CD8-positive, alpha-beta T cell (primary cell): ENCODE measurements at regions of chr19 and their contacts with region 1.

Region 1: DNA sequence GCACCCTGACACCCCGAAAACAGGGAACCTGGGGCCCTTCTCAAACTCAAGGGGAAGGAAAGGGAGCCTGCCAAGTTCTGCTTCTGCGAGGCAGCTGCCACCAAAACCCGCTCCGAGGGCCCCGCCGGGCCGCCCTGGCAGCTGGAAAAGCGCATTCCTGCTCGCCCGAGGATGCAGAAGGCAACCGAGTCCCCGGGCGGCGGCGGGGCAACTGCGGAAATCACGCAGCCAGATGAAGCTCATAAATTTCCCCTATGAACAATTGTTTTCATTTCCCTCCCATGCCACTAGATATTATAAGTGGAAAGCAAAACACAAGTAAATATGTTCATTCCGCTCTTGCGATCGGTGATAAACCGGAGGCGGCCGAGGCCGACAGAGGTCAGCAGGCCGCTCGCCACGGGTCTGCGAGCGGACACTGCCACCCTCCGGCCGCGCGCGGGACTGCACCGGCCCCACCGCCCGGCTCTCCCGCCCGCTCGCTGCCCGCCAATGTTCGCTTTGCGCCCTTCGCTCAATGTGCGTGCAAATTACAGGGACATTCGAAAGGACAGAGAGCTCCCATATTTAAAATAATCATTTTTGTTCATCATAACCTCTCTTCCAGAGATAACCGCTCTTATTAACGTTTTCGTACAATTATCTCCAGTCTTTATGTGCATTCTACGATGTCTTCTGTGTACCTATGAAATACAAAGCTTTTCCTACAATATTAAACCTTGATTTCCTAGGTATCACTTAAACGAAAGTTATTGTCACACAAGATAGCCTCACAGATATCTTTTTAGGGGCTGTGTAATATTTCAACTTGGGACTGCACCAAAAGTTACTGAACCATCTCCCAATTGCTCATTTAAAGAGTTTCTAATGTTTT is 120.8 kb upstream of the ZNF507 start:
- DNase-seq: peak; percentile 15 to 74 (median 56)
- ATAC-seq: peak; percentile 60
- H3K4me3 ChIP-seq: peak overlapping the region; percentile 24 to 27
- H3K4me3 Mint-ChIP-seq: peak overlapping the region; percentile 77
- H3K27ac ChIP-seq: no peak overlapping the region
- H3K27ac Mint-ChIP-seq: no peak overlapping the region
- H3K4me1 ChIP-seq: peaks cover 12% of the 10 kb centered on the region
- H3K4me1 Mint-ChIP-seq: peaks cover 14% of the 10 kb centered on the region
- H3K27me3 ChIP-seq: peaks cover 12 to 14% of the 10 kb centered on the region in 2 experiments
- H3K27me3 Mint-ChIP-seq: peaks cover 41% of the 10 kb centered on the region
- CTCF ChIP-seq: peak; percentile 100

Region 2: GRCh38 chr19:30669329-30670010 is 1555.1 kb before region 1 on chr19:
- CTCF ChIA-PET with region 1: interaction called, 72 read pairs
- POLR2A ChIA-PET with region 1: no interaction called
- intact Hi-C with region 1: loop called in 1 of 2 experiments (anchors 1 kb)
- DNase-seq: peak in 8 of 9 experiments; percentile 11 to 59 (median 41)
- ATAC-seq: no peak
- H3K4me3 ChIP-seq: no peak overlapping the region
- H3K4me3 Mint-ChIP-seq: no peak overlapping the region
- H3K27ac ChIP-seq: no peak overlapping the region
- H3K27ac Mint-ChIP-seq: no peak overlapping the region
- H3K4me1 ChIP-seq: no peaks in the 10 kb centered on the region
- H3K4me1 Mint-ChIP-seq: no peaks in the 10 kb centered on the region
- H3K27me3 ChIP-seq: peaks cover 0 to 6% of the 10 kb centered on the region in 2 experiments
- H3K27me3 Mint-ChIP-seq: peaks cover 36% of the 10 kb centered on the region
- CTCF ChIP-seq: peak; percentile 66

Region 3: GRCh38 chr19:30682999-30683536 is 1541.5 kb before region 1 on chr19:
- CTCF ChIA-PET with region 1: interaction called, 39 read pairs
- POLR2A ChIA-PET with region 1: no interaction called
- intact Hi-C with region 1: loop called in 1 of 2 experiments (anchors 1 kb)
- DNase-seq: peak in 8 of 9 experiments; percentile 27 to 61 (median 44)
- ATAC-seq: no peak
- H3K4me3 ChIP-seq: no peak overlapping the region
- H3K4me3 Mint-ChIP-seq: no peak overlapping the region
- H3K27ac ChIP-seq: no peak overlapping the region
- H3K27ac Mint-ChIP-seq: no peak overlapping the region
- H3K4me1 ChIP-seq: no peaks in the 10 kb centered on the region
- H3K4me1 Mint-ChIP-seq: no peaks in the 10 kb centered on the region
- H3K27me3 ChIP-seq: no peaks in the 10 kb centered on the region
- H3K27me3 Mint-ChIP-seq: peaks cover 35% of the 10 kb centered on the region
- CTCF ChIP-seq: peak; percentile 68

Region 4: DNA sequence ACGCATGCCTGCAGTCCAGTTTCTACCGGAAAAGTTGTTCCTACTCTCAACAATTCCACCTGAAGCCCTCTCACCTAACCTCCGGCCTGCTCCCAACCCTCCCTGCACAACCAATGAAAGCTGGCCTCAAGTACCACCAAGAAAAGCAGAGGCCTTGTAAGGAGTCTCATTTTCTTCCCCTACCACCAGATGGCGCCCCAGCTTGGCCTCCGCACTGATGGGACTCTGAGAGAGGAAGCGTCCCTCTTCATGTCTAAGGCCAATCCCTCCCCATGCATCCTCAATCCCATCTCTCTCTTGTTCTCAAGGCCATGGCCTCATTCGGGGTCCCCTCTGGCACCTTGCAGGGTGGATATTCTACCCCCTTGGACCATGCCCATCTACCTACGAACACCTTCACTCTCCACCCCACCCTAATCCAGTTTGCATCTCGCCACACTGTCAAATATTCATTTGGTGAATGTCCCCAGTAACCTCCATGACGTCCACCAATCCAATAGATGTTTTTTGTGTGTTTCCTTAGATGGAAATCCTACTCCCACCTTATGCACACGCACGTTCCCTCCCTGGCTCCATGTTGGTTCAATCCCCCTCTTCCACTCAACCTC is 1439.7 kb before region 1 on chr19:
- CTCF ChIA-PET with region 1: interaction called, 39 read pairs
- POLR2A ChIA-PET with region 1: no interaction called
- intact Hi-C with region 1: loop called in 1 of 2 experiments (anchors 1 kb)
- DNase-seq: peak; percentile 18 to 72 (median 51)
- ATAC-seq: no peak
- H3K4me3 ChIP-seq: no peak overlapping the region
- H3K4me3 Mint-ChIP-seq: no peak overlapping the region
- H3K27ac ChIP-seq: no peak overlapping the region
- H3K27ac Mint-ChIP-seq: no peak overlapping the region
- H3K4me1 ChIP-seq: no peaks in the 10 kb centered on the region
- H3K4me1 Mint-ChIP-seq: no peaks in the 10 kb centered on the region
- H3K27me3 ChIP-seq: no peaks in the 10 kb centered on the region
- H3K27me3 Mint-ChIP-seq: peaks cover 9% of the 10 kb centered on the region
- CTCF ChIP-seq: peak; percentile 44

Region 5: GRCh38 chr19:31349160-31349881 is 875.3 kb before region 1 on chr19 and contains the start of gene TSHZ3:
- CTCF ChIA-PET with region 1: no interaction called
- POLR2A ChIA-PET with region 1: no interaction called
- intact Hi-C with region 1: loop called in 1 of 2 experiments (anchors 10 kb)
- DNase-seq: peak in 6 of 9 experiments; percentile 12 to 69 (median 48)
- ATAC-seq: peak; percentile 45
- H3K4me3 ChIP-seq: peak within 1 kb of the TSS; percentile 37 to 48
- H3K4me3 Mint-ChIP-seq: peak within 1 kb of the TSS; percentile 74
- H3K27ac ChIP-seq: no peak within 1 kb of the TSS
- H3K27ac Mint-ChIP-seq: no peak within 1 kb of the TSS
- H3K4me1 ChIP-seq: peaks cover 22% of the 10 kb centered on the region
- H3K4me1 Mint-ChIP-seq: peaks cover 23% of the 10 kb centered on the region
- H3K27me3 ChIP-seq: peaks cover 30 to 53% of the 10 kb centered on the region in 2 experiments
- H3K27me3 Mint-ChIP-seq: peaks cover 58% of the 10 kb centered on the region
- CTCF ChIP-seq: no peak
- total RNA-seq, gene TSHZ3: not detected

Region 6: GRCh38 chr19:31627620-31628361 is 596.8 kb before region 1 on chr19:
- CTCF ChIA-PET with region 1: no interaction called
- POLR2A ChIA-PET with region 1: no interaction called
- intact Hi-C with region 1: no loop called
- DNase-seq: no peak
- ATAC-seq: no peak
- H3K4me3 ChIP-seq: no peak overlapping the region
- H3K4me3 Mint-ChIP-seq: no peak overlapping the region
- H3K27ac ChIP-seq: no peak overlapping the region
- H3K27ac Mint-ChIP-seq: no peak overlapping the region
- H3K4me1 ChIP-seq: no peaks in the 10 kb centered on the region
- H3K4me1 Mint-ChIP-seq: no peaks in the 10 kb centered on the region
- H3K27me3 ChIP-seq: peaks cover 0 to 2% of the 10 kb centered on the region in 2 experiments
- H3K27me3 Mint-ChIP-seq: peaks cover 3% of the 10 kb centered on the region
- CTCF ChIP-seq: no peak

Region 7: DNA sequence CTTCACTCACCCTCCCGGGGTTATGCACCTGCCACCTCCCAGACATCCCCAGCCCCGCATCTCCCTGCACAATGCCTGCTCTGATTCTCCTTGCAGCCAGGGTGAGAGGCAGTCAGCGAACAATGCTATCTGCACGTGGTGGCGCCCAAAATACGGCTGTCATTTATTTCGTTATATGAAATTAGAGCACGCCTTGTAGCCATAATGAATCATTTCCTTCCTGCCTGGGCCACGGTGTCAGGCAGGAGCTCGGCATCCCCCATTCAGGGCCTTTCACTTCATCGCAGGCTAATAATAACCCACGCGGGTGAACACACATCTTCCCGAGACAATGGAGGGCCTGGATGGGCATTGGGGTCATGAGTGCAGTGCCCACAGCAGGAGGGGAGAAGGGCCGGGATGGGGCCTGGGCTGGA is 23.0 kb before region 1 on chr19:
- CTCF ChIA-PET with region 1: interaction called, 15 read pairs
- POLR2A ChIA-PET with region 1: no interaction called
- intact Hi-C with region 1: no loop called
- DNase-seq: peak in 1 of 9 experiments; percentile 2
- ATAC-seq: no peak
- H3K4me3 ChIP-seq: no peak overlapping the region
- H3K4me3 Mint-ChIP-seq: no peak overlapping the region
- H3K27ac ChIP-seq: no peak overlapping the region
- H3K27ac Mint-ChIP-seq: no peak overlapping the region
- H3K4me1 ChIP-seq: no peaks in the 10 kb centered on the region
- H3K4me1 Mint-ChIP-seq: peaks cover 2% of the 10 kb centered on the region
- H3K27me3 ChIP-seq: peaks cover 0 to 2% of the 10 kb centered on the region in 2 experiments
- H3K27me3 Mint-ChIP-seq: peaks cover 24% of the 10 kb centered on the region
- CTCF ChIP-seq: no peak

Region 8: GRCh38 chr19:32234663-32235217 is 10.1 kb after region 1 on chr19:
- CTCF ChIA-PET with region 1: interaction called, 17 read pairs
- POLR2A ChIA-PET with region 1: no interaction called
- intact Hi-C with region 1: no loop called
- DNase-seq: no peak
- ATAC-seq: no peak
- H3K4me3 ChIP-seq: no peak overlapping the region
- H3K4me3 Mint-ChIP-seq: no peak overlapping the region
- H3K27ac ChIP-seq: no peak overlapping the region
- H3K27ac Mint-ChIP-seq: no peak overlapping the region
- H3K4me1 ChIP-seq: no peaks in the 10 kb centered on the region
- H3K4me1 Mint-ChIP-seq: no peaks in the 10 kb centered on the region
- H3K27me3 ChIP-seq: no peaks in the 10 kb centered on the region
- H3K27me3 Mint-ChIP-seq: peaks cover 8% of the 10 kb centered on the region
- CTCF ChIP-seq: no peak